GM10248 (cell line): ENCODE measurements at regions of chr11 and their contacts with region 1.

Region 1: DNA sequence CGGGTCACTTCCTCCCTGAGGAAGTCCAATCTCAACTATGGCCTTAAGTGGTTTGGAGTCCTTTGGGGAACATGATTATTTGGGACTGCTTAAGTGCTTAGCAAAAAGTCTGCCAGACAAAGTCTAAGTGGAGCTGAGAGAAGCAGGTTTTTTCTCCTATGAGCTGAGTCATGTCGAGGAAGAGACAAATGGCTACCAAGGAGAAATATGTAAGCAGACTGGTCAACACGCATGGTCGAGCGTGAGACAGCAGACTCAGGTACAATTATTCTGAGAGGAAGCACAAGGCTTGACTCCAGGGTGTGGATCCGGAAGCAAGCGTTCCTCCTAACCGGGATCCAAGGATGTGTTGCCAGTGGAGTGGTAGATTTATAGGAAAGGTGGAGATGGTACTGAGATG is 30.6 kb downstream of the UBASH3B start:
- DNase-seq: no peak
- CTCF ChIP-seq: no peak

Region 2: DNA sequence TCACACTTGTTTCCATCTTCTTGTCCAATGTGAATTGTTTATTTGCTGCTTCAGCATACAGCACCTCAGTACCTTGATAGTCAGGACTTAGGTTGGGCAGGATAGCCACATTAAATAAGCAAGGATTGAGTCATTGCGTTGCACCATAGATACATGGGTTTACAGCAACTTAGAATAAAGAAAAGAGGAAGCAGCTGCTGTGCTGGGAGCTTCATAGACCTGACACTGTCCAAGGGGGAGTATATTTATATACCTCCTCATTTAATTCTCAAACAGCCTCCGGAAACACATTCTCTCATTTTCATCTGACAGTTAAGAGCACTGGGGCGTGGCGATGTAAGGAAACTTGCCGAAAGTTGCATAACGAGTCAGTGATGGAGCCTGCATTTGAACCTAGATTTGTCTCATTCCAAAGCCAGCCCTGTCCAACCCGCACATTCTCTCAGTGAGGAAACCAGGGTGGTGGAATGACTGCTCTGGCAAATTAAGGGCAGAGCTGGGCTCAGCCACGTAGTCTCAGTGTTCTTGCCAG is 11.6 kb after region 1 on chr11:
- CTCF ChIA-PET with region 1: interaction called, 11 read pairs
- POLR2A ChIA-PET with region 1: no interaction called
- DNase-seq: peak; percentile 69
- CTCF ChIP-seq: no peak